Naive thymus-derived CD8-positive, alpha-beta T cell (primary cell): ENCODE measurements at regions of chr17 and their contacts with region 1.

Region 1: DNA sequence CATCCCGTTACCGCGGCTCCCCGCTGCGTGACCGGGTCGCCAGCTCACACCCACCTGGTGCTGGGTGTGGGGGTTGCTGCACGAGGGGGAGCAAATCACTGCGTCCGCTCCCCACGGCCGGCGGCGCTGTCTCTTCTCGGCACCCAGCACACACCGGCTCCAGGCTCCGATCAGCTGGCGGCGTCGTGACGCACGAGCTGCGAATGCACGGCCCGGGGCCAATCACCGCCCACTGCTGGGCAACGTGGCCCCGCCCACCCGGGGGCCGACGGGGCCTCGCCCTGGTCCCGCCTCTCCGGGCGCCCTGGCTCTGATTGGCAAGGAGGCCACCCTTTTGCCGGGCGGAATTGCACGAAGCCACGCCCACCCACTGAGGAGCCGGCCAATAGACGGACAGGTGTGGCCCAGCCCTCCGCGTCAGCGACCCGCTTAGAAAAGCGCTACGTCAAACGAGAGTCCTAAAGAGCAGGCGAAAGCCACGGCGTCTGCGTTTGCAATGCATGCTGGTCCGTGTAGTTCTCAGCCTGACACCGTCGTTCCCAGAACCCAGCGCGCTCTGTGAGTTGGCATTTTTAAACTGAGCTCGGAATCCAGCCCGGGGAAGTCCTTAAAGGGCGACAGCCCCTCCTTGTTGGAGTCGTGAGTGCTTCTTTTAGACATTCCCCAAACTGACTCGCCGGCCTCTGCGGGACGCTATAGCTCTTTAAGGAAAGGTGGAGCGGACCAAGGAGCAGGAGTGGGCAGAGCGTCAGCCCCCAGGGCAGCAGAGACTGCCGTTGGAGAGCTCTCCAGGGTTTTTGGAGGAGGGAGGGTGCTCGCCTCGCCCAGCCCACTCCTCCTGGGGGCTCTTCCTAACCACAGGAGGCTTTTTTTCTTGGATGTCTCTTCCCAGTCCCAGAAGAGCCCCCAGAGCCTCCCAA is 6.2 kb upstream of the TLCD2 start:
- DNase-seq: peak; percentile 95 to 100 (median 100)
- ATAC-seq: peak; percentile 87
- H3K4me3 Mint-ChIP-seq: peak overlapping the region; percentile 83 to 96 (median 94)
- H3K27ac Mint-ChIP-seq: peak overlapping the region; percentile 90 to 96 (median 94)
- H3K4me1 Mint-ChIP-seq: peaks cover 13 to 48% (median 34%) of the 10 kb centered on the region in 4 donors
- H3K27me3 Mint-ChIP-seq: peaks cover 0 to 14% (median 13%) of the 10 kb centered on the region in 5 donors

Region 2: DNA sequence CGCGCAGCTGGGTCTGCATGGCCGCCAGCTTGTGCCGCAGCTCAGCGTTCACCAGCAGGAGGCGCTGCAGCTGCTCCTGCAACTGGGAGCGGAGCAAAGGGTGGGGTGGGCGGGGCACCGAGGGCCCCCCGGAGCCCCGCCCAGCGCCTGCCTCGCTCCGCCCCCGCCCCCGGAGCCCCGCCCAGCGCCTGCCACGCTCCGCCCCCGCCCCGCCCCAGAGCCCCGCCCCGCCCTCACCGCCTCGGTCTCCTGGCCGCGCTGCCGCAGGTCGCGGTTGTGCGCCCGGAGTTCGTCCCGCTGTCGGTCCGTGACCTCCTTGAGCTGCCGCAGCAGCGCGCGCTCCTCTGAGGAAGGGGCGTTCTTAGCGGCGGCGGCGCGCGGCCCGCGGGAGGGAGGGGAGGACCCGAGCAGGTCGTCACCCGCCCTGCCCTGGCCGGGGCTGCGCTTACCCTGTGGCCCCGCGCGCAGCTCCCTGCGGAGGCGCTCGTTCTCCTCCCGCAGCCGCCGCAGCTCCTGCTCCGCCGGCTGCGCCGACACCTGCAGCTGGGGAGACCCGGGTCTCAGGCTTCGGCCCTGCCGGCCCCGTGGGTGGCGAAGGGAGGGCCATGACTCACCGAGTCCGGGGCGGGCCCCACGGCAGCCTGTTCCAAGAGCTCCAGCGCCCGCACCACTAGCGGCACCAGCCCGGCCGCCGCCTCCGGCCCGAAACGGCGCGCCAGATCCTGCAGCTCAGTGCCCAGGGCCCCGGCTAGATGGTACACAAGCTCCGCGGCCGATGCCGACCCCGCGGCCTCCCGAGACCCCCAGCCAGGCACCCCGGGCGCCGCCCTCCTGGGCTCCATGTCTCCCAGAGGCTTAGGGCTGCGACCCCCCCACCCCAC is 67.1 kb before region 1 on chr17:
- POLR2A ChIA-PET with region 1: interaction called, 19 read pairs
- DNase-seq: peak; percentile 89 to 99 (median 94)
- ATAC-seq: peak; percentile 81 to 82
- H3K4me3 Mint-ChIP-seq: peak overlapping the region; percentile 54 to 80 (median 69)
- H3K27ac Mint-ChIP-seq: peak overlapping the region in 2 of 10 donors; percentile 43 to 75
- H3K4me1 Mint-ChIP-seq: peaks cover 2 to 30% (median 20%) of the 10 kb centered on the region in 4 donors
- H3K27me3 Mint-ChIP-seq: no peaks in the 10 kb centered on the region

Region 3: DNA sequence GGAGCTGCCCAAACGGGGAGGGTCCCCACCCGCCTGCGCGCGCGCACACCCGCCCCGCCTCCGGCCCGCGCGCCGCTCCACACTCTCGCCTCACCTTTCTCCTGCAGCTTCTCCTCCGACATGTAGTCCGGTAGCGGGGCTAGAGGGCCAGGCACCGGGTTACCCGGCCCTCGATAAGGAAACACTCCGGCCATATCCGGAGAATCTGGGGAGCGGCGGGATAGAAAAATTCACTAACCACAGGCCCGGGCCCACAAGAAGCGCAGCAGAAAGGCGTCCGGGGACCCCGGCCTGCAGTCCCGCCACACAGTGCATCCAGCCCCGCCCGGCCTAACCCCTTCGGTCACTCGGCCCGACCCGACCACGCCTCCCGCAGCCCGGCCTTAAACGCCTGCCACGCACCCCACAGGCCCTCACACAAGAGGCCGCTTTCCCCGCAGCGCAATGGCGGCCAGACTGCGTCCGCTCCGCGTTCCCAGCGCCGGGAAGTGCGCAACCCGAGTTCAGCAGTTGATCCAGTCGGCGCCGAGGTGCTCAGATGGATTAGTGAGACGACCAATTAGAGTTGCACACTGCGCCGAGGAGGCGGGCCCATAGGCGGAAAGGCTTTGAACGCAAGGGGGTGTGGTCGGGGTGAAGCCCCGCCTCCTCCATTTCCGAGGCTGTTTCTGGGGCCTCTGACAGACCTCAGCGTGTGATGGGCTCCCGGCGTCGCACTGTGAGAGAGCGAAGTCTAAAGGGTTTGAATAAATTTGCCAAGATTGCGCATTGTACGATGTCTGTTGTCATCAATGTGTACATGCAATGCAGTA is 31.8 kb before region 1 on chr17 and contains the start of gene PRPF8:
- POLR2A ChIA-PET with region 1: interaction called, 18 read pairs
- DNase-seq: peak; percentile 95 to 99 (median 98)
- ATAC-seq: peak; percentile 96 to 97
- H3K4me3 Mint-ChIP-seq: peak within 1 kb of the TSS; percentile 96 to 100 (median 99)
- H3K27ac Mint-ChIP-seq: peak within 1 kb of the TSS; percentile 97 to 100 (median 100)
- H3K4me1 Mint-ChIP-seq: peaks cover 32 to 54% (median 49%) of the 10 kb centered on the region in 4 donors
- H3K27me3 Mint-ChIP-seq: no peaks in the 10 kb centered on the region
- polyA plus RNA-seq, gene PRPF8: 133 to 227 (median 176) TPM

Region 4: GRCh38 chr17:1783834-1784611 is 67.7 kb after region 1 on chr17:
- POLR2A ChIA-PET with region 1: interaction called, 27 read pairs
- DNase-seq: peak in 2 of 10 donors; percentile 22 to 23
- ATAC-seq: peak; percentile 56 to 63
- H3K4me3 Mint-ChIP-seq: peak overlapping the region in 1 of 10 donors; percentile 36
- H3K27ac Mint-ChIP-seq: peak overlapping the region in 8 of 10 donors; percentile 6 to 87 (median 57)
- H3K4me1 Mint-ChIP-seq: peaks cover 0 to 21% (median 8%) of the 10 kb centered on the region in 4 donors
- H3K27me3 Mint-ChIP-seq: no peaks in the 10 kb centered on the region

Region 5: GRCh38 chr17:1829592-1830257 is 113.4 kb after region 1 on chr17 and contains the starts of genes RPA1 and SMYD4:
- POLR2A ChIA-PET with region 1: interaction called, 18 read pairs
- DNase-seq: peak; percentile 83 to 92 (median 88)
- ATAC-seq: peak; percentile 96 to 98
- H3K4me3 Mint-ChIP-seq: peak within 1 kb of the TSS; percentile 89 to 99 (median 97)
- H3K27ac Mint-ChIP-seq: peak within 1 kb of the TSS; percentile 54 to 98 (median 94)
- H3K4me1 Mint-ChIP-seq: peaks cover 21 to 71% (median 60%) of the 10 kb centered on the region in 4 donors
- H3K27me3 Mint-ChIP-seq: no peaks in the 10 kb centered on the region
- polyA plus RNA-seq, gene RPA1: 79.4 to 89.7 (median 84.5) TPM
- polyA plus RNA-seq, gene SMYD4: 10.8 to 16.9 (median 12.7) TPM